Naive thymus-derived CD8-positive, alpha-beta T cell (primary cell): ENCODE measurements at regions of chr4 and their contacts with region 1.

Region 1: GRCh38 chr4:153497988-153498967 is 32.1 kb downstream of the TMEM131L start:
- DNase-seq: peak in 1 of 10 donors; percentile 34
- ATAC-seq: peak; percentile 41 to 64
- H3K4me3 Mint-ChIP-seq: peak overlapping the region; percentile 59 to 83 (median 76)
- H3K27ac Mint-ChIP-seq: peak overlapping the region; percentile 92 to 100 (median 96)
- H3K4me1 Mint-ChIP-seq: peaks cover 61 to 97% (median 95%) of the 10 kb centered on the region in 4 donors
- H3K27me3 Mint-ChIP-seq: no peaks in the 10 kb centered on the region

Region 2: GRCh38 chr4:153472122-153473037 is 25.9 kb before region 1 on chr4:
- POLR2A ChIA-PET with region 1: interaction called, 74 read pairs
- DNase-seq: no peak
- ATAC-seq: no peak
- H3K4me3 Mint-ChIP-seq: peak overlapping the region; percentile 93 to 98 (median 97)
- H3K27ac Mint-ChIP-seq: peak overlapping the region; percentile 92 to 99 (median 98)
- H3K4me1 Mint-ChIP-seq: peaks cover 48 to 92% (median 79%) of the 10 kb centered on the region in 4 donors
- H3K27me3 Mint-ChIP-seq: no peaks in the 10 kb centered on the region

Region 3: GRCh38 chr4:153488006-153488891 is 10.0 kb before region 1 on chr4:
- POLR2A ChIA-PET with region 1: interaction called, 69 read pairs
- DNase-seq: peak; percentile 51 to 88 (median 82)
- ATAC-seq: peak; percentile 70 to 82
- H3K4me3 Mint-ChIP-seq: peak overlapping the region; percentile 72 to 98 (median 88)
- H3K27ac Mint-ChIP-seq: peak overlapping the region; percentile 91 to 100 (median 97)
- H3K4me1 Mint-ChIP-seq: peaks cover 47 to 89% (median 80%) of the 10 kb centered on the region in 4 donors
- H3K27me3 Mint-ChIP-seq: no peaks in the 10 kb centered on the region

Region 4: GRCh38 chr4:153521999-153522801 is 23.9 kb after region 1 on chr4:
- POLR2A ChIA-PET with region 1: interaction called, 13 read pairs
- DNase-seq: peak; percentile 28 to 81 (median 58)
- ATAC-seq: peak; percentile 68 to 75
- H3K4me3 Mint-ChIP-seq: peak overlapping the region; percentile 64 to 89 (median 84)
- H3K27ac Mint-ChIP-seq: peak overlapping the region; percentile 83 to 97 (median 92)
- H3K4me1 Mint-ChIP-seq: peaks cover 56 to 99% (median 98%) of the 10 kb centered on the region in 4 donors
- H3K27me3 Mint-ChIP-seq: no peaks in the 10 kb centered on the region

Region 5: GRCh38 chr4:153555730-153556433 is 57.6 kb after region 1 on chr4:
- POLR2A ChIA-PET with region 1: no interaction called
- DNase-seq: no peak
- ATAC-seq: no peak
- H3K4me3 Mint-ChIP-seq: no peak overlapping the region
- H3K27ac Mint-ChIP-seq: peak overlapping the region in 6 of 10 donors; percentile 12 to 86 (median 48)
- H3K4me1 Mint-ChIP-seq: peaks cover 24 to 47% (median 39%) of the 10 kb centered on the region in 4 donors
- H3K27me3 Mint-ChIP-seq: no peaks in the 10 kb centered on the region